CD14-positive monocyte (primary cell): ENCODE measurements at regions of chr2 and their contacts with region 1.

Region 1: DNA sequence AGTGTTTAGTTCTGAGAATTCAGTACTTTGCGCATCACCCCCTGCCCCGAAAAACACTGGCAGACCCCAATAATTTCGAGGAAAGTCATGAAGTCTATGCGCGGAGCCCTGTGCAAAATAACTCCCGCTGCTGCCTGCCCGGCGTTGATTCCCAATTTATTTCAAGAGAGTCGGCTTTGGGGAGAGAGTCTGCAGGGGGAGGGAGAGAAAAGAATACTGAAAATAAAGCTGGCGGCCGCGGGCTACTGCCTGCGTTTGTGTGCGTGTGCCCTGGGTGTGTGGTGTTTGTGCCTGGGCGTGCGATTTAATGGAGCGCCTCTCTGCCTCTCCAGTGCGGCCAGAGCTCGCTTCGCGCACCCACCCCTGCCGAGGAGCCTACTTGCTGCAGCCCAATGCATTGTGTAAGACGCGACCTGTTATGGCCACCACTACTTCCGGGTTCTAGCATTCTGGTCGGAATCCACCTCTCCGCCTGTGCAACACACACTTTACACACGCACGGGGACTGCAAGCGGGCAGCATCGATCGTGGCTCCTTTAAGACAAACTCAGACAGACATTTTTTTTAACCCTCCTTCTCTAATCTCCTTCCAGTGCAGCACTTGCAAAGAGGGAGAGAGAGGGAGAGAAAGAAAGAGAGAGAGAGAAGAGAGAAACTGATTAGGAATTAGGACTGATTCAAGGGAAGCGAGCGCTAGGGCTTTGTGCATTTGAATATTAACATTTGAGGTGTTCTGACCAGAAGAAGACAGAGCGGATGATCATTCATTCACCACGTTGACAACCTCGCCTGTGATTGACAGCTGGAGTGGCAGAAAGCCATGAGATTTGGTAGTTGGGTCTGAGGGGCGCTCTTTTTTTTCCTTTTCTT is at the start of gene MEIS1:
- DNase-seq: peak; percentile 62 to 69 (median 66)
- H3K4me3 ChIP-seq: peak within 1 kb of the TSS; percentile 32 to 95 (median 41)
- H3K4me3 Mint-ChIP-seq: peak within 1 kb of the TSS; percentile 83 to 99
- H3K27ac ChIP-seq: no peak within 1 kb of the TSS
- H3K27ac Mint-ChIP-seq: peak within 1 kb of the TSS in 4 of 7 donors; percentile 16 to 83 (median 58)
- H3K4me1 ChIP-seq: peaks cover 32 to 75% of the 10 kb centered on the region in 2 donors
- H3K4me1 Mint-ChIP-seq: peaks cover 69% of the 10 kb centered on the region
- H3K27me3 ChIP-seq: peaks cover 72 to 97% of the 10 kb centered on the region in 2 donors
- H3K27me3 Mint-ChIP-seq: peaks cover 92 to 97% (median 95%) of the 10 kb centered on the region in 3 donors
- CTCF ChIP-seq: no peak
- polyA plus RNA-seq, gene MEIS1: 0.09 to 0.40 TPM in 2 of 3 donors, not detected in the other

Region 2: GRCh38 chr2:66574701-66575624 is 140.0 kb after region 1 on chr2:
- intact Hi-C with region 1: loop called (anchors 5 to 10 kb)
- DNase-seq: peak in 2 of 3 donors; percentile 12 to 56
- H3K4me3 ChIP-seq: peak overlapping the region in 2 of 3 experiments; percentile 11 to 64
- H3K4me3 Mint-ChIP-seq: peak overlapping the region; percentile 65 to 89
- H3K27ac ChIP-seq: no peak overlapping the region
- H3K27ac Mint-ChIP-seq: no peak overlapping the region
- H3K4me1 ChIP-seq: peaks cover 30 to 34% of the 10 kb centered on the region in 2 donors
- H3K4me1 Mint-ChIP-seq: peaks cover 33% of the 10 kb centered on the region
- H3K27me3 ChIP-seq: peaks cover 63 to 69% of the 10 kb centered on the region in 2 donors
- H3K27me3 Mint-ChIP-seq: peaks cover 25 to 63% (median 35%) of the 10 kb centered on the region in 3 donors
- CTCF ChIP-seq: no peak

Region 3: DNA sequence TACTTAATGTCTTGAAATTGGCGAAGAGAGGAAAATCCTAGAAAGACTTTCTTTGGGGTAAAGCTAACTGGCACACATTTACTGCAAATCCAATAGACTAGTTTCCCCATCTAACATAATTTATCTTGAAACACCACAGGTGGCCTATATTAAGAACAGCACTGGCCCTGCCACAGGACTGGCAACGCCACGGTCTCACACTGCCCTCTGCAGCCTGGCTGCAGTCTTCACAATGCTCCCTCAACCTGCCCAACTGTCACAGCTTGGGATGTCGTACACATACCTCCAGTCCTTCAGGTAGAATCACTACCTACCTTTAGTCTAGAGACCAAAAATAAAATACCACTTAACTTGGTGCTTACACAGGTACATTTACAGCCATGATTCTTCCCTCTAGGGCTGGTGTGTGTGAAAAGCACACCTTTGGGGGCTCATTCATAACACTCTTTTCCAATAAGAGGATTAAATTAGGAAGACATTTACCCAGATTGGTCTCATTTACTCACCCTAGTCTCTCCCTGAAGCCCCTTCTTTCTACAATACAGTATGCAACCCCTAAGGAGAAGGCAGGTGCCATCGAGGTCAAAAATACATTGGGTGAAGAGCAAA is 1405.7 kb after region 1 on chr2:
- intact Hi-C with region 1: loop called in 1 of 2 experiments (anchors 10 kb)
- DNase-seq: no peak
- H3K4me3 ChIP-seq: no peak overlapping the region
- H3K4me3 Mint-ChIP-seq: no peak overlapping the region
- H3K27ac ChIP-seq: no peak overlapping the region
- H3K27ac Mint-ChIP-seq: no peak overlapping the region
- H3K4me1 ChIP-seq: no peaks in the 10 kb centered on the region
- H3K4me1 Mint-ChIP-seq: no peaks in the 10 kb centered on the region
- H3K27me3 ChIP-seq: peaks cover 0 to 5% of the 10 kb centered on the region in 2 donors
- H3K27me3 Mint-ChIP-seq: peaks cover 2 to 17% (median 5%) of the 10 kb centered on the region in 3 donors
- CTCF ChIP-seq: no peak